Activated CD8-positive, alpha-beta T cell treated with anti-CD3 and anti-CD28 coated beads, Interleukin-2, amount 10 ng/mL, durations not matched to agents 7 days and 5 days (primary cell): ENCODE measurements at regions of chr10 and their contacts with region 1.

Region 1: DNA sequence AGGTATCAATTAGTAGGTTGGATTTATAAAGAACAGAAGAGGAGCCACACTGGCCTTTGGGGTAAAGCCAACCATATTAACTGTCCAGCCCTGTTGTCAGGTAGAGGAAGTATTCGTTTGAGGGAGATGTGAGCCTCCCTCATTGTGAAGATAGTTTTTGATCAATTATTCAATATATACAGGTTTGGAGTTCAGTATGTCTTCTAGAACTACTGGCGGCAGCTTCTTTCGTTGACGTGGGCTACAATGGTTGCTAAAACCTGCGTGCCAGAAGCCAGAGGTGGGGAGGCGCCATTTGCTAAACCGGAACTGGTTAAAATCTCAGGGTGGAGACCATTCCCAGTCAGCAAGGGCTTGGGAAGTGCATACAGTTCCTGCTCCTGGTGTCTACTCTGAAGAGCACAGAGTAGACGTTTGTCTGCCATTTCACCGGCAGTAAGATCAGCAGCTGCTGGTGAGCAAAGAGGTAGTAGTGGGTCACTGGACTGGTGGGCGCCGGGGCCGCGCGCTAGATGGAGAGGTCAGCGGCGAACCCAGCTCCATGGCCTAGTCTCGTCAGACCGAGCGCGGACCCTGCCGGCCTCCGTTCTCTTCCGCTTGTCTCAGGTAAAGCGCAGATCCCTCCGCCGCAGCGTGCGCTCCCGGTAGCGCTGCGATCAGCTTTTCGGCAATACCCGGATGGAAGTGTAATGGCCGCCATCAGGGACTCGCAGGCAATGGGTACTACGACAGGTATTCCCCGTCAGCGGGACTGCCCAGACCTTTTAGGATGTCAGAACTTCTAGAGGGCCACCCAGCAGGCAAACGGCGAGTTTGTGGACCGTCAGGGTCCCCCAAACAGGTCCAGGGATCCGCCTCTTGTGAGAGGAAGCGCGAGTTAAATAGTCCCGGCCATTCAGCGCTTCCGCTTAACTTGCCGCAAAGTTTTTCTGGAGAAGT is at the start of gene ZNF518A:
- DNase-seq: peak; percentile 92
- ATAC-seq: peak; percentile 86
- H3K4me3 Mint-ChIP-seq: peak within 1 kb of the TSS; percentile 90
- H3K27ac Mint-ChIP-seq: peak within 1 kb of the TSS; percentile 100
- H3K4me1 Mint-ChIP-seq: peaks cover 24% of the 10 kb centered on the region
- H3K27me3 Mint-ChIP-seq: peaks cover 20% of the 10 kb centered on the region
- total RNA-seq, gene ZNF518A: 15.3 to 16.5 TPM

Region 2: DNA sequence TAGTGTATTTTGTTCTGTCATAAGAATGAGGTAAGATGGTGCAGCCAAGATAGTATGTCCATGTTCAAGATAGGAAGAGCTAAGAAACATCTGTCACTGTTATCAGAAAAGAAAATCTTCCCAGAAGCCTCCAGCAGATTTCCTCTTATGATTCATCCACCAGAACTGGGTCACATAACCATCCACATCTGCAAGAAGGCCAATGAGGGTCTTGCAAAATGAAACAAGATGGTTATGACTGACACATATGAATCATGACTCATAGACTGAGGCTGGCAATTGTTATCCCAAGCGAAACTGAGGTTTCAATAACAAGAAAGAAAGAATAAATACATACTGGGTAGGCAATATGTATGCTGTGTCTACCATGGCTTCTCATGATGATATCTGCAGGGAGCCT is 55.9 kb before region 1 on chr10:
- CTCF ChIA-PET with region 1: no interaction called
- POLR2A ChIA-PET with region 1: interaction called, 17 read pairs
- DNase-seq: no peak
- ATAC-seq: peak; percentile 81
- H3K4me3 Mint-ChIP-seq: no peak overlapping the region
- H3K27ac Mint-ChIP-seq: no peak overlapping the region
- H3K4me1 Mint-ChIP-seq: peaks cover 28% of the 10 kb centered on the region
- H3K27me3 Mint-ChIP-seq: no peaks in the 10 kb centered on the region

Region 3: DNA sequence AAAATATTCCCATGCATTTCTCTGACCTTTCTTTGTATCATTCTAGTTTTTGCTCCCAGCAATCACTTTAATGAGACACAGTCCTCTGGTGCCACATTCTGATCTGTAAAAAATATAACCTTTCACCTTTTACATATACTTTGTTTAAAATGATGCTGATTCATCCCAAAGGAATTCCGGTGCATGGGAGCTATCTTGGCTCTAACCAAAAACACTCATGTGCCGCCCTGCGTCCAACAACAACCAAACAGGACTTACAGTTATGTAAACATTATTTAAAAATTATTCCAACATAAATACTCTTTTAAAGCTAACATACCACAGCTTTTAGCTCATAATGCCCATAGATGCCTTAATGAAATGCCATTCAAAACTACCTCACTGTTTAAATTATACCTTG is 236.8 kb after region 1 on chr10:
- CTCF ChIA-PET with region 1: no interaction called
- POLR2A ChIA-PET with region 1: no interaction called
- DNase-seq: no peak
- ATAC-seq: no peak
- H3K4me3 Mint-ChIP-seq: no peak overlapping the region
- H3K27ac Mint-ChIP-seq: no peak overlapping the region
- H3K4me1 Mint-ChIP-seq: no peaks in the 10 kb centered on the region
- H3K27me3 Mint-ChIP-seq: peaks cover 3% of the 10 kb centered on the region